Body of pancreas (tissue), 4 donors: ENCODE measurements at regions of chr2 and their contacts with region 1.

Region 1: GRCh38 chr2:235696246-235696645 is 202.4 kb downstream of the AGAP1 start:
- DNase-seq: no peak
- ATAC-seq: no peak
- H3K4me3 ChIP-seq: no peak overlapping the region
- H3K27ac ChIP-seq: no peak overlapping the region
- H3K4me1 ChIP-seq: no peaks in the 10 kb centered on the region
- H3K27me3 ChIP-seq: no peaks in the 10 kb centered on the region
- CTCF ChIP-seq: no peak
- POLR2A ChIP-seq: no peak

Region 2: DNA sequence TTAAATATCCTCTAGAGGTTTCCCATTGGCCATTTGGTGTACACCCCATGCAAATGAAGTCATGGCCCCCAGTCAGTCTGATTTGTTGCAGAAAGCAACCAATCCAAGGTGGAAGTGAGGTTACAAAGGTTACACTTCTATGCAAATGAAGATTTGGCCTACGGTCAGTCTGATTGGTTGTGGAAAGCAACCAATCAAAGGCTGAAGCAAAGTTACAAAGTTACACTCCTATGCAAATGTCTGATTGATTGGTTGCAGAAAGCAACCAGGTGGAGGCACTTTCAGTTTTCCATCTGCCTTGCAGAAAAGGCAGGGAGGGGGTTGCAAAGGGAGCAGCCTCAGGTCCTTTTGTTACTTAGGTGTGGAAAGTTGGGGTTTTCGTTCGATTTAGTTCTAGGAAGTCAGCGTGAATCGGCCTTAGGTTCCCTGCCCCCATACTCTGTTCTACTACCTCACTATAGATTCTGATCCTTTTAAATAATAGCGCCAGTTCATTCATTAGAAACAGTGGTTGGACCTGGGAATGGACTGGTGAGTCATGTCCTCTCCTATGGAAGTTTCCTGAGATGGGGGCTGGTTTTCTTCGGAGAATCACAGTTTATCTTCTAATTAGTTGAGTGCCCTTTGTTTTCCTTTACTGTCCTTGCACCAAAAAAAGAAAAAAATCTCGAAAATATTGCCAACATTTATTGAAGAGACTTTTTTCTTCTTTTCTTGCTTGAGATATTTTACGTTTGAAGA is 77.1 kb after region 1 on chr2:
- intact Hi-C with region 1: loop called (anchors 2 kb)
- DNase-seq: no peak
- ATAC-seq: no peak
- H3K4me3 ChIP-seq: no peak overlapping the region
- H3K27ac ChIP-seq: no peak overlapping the region
- H3K4me1 ChIP-seq: no peaks in the 10 kb centered on the region
- H3K27me3 ChIP-seq: no peaks in the 10 kb centered on the region
- CTCF ChIP-seq: no peak
- POLR2A ChIP-seq: no peak